PC-9 (cell line): ENCODE measurements at regions of chr20 and their contacts with region 1.

Region 1: DNA sequence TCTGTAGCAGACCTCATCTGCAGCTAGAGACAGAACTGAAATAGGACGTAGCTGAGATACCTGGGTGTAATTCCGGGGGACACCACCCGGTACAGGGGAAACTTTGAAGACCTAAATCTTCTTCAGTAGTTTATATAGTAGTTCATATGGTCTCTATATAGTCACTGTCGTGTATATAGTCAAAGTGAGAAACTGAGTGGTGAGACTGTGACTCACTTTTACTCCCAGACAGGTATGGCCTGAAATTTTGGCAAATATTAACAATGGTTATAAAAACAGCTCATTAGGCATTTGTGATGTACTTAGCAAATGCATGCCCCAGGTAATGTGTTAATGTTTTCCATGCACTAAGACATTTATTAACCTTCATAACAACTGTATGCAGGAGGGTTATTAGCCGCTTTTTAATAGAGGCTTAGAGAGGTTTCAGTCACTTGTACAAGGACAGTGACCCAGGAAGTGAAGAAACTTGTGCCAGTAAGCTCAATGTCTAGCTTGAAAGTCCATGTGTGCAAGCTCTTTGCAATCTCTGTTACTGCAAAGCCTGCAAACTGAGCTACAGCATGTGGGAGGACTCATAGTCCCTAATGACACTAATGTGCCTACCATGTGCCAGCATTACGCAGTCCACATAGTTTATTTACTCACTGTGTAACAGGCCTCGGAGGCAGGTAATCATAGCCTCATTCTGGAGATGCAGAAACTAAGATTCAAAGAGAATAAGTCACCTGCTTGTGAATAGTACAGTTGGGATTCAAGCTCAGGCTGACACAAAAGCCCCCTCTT is 165.4 kb upstream of the CHD6 start:
- DNase-seq: no peak
- H3K4me3 ChIP-seq: no peak overlapping the region
- H3K27ac ChIP-seq: no peak overlapping the region
- H3K4me1 ChIP-seq: no peaks in the 10 kb centered on the region
- H3K27me3 ChIP-seq: peaks cover 8% of the 10 kb centered on the region
- CTCF ChIP-seq: no peak

Region 2: DNA sequence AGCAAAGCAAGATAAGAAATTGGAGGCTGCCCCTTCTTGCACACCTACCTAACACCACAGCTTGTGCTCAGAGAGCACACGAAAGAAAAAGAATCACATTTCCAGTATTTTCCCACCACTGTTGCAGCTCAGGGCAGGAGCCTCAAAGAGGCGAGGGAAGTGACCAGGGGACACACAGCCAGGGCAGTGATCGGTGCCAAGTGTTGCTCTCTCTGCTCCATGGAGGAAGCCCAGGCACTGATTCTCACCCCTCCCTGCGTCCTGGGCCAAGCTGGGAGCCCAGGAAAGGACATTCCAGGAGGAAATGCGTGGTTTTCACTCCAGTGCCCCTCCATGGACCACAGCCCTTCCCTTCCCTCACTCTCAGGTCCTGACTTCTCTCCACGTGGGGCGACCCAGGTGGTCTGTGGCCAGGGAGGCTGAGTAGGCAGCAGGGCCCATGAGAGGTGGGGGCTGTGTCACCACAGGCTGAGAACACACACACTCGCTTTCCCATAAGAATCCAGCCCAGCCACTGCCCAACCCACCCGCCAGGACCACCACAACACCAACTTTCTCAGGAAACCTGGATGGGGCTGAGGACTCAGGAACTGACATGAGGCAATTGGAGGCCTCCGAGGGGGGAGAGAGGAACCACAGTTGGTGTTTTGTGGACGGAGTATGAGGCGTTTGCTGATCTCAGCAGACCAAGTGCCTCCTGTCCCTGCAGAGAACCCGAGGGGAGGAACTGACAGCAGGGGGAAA is 1012.9 kb before region 1 on chr20:
- CTCF ChIA-PET with region 1: no interaction called
- POLR2A ChIA-PET with region 1: no interaction called
- intact Hi-C with region 1: no loop called
- DNase-seq: no peak
- H3K4me3 ChIP-seq: no peak overlapping the region
- H3K27ac ChIP-seq: no peak overlapping the region
- H3K4me1 ChIP-seq: no peaks in the 10 kb centered on the region
- H3K27me3 ChIP-seq: peaks cover 66% of the 10 kb centered on the region
- CTCF ChIP-seq: no peak

Region 3: GRCh38 chr20:41746634-41747033 is 37.0 kb before region 1 on chr20:
- CTCF ChIA-PET with region 1: interaction called, 10 read pairs
- POLR2A ChIA-PET with region 1: no interaction called
- intact Hi-C with region 1: no loop called
- DNase-seq: no peak
- H3K4me3 ChIP-seq: no peak overlapping the region
- H3K27ac ChIP-seq: no peak overlapping the region
- H3K4me1 ChIP-seq: no peaks in the 10 kb centered on the region
- H3K27me3 ChIP-seq: peaks cover 59% of the 10 kb centered on the region
- CTCF ChIP-seq: no peak

Region 4: GRCh38 chr20:41798930-41799502 is 15.4 kb after region 1 on chr20:
- CTCF ChIA-PET with region 1: no interaction called
- POLR2A ChIA-PET with region 1: no interaction called
- intact Hi-C with region 1: no loop called
- DNase-seq: no peak
- H3K4me3 ChIP-seq: no peak overlapping the region
- H3K27ac ChIP-seq: no peak overlapping the region
- H3K4me1 ChIP-seq: no peaks in the 10 kb centered on the region
- H3K27me3 ChIP-seq: 0 out of 2 replicates have a peak, but pooled peaks cover 10% of the 10 kb centered on the region
- CTCF ChIP-seq: no peak

Region 5: GRCh38 chr20:41872930-41873329 is 89.3 kb after region 1 on chr20:
- CTCF ChIA-PET with region 1: no interaction called
- POLR2A ChIA-PET with region 1: no interaction called
- intact Hi-C with region 1: no loop called
- DNase-seq: no peak
- H3K4me3 ChIP-seq: no peak overlapping the region
- H3K27ac ChIP-seq: no peak overlapping the region
- H3K4me1 ChIP-seq: no peaks in the 10 kb centered on the region
- H3K27me3 ChIP-seq: peaks cover 38% of the 10 kb centered on the region
- CTCF ChIP-seq: no peak